ENCODE measurements at regions of chr15 and their contacts with region 1.

Region 1: DNA sequence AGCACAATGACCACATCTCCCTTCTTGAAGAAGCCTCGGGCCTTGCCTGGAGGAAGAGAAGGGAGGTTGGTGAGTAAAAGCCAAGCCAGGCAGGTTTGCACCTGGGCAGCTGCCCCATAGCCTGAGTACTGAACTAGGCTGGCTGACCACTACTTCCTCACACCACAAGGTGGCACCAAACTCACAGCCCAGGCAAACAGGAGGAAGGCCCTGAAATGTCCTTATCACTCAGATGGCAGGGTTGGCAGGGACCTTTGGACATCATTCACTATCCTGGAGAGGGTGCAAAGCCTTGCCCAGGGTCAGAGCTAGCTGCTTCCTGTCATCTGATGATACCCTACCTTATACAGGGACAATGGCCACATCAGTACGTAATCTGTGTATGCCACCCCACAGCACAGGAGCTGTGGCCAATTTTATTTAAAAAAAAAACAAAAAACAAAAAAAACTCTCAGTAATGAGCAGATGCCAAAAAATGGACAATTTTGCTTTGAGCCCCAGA is 2.2 kb upstream of the GRAMD2A start:
- DNase-seq: peak; percentile 69 to 78 (median 72)
- H3K4me3 ChIP-seq: no peak overlapping the region
- H3K4me3 Mint-ChIP-seq: no peak overlapping the region
- H3K27ac ChIP-seq: no peak overlapping the region
- H3K27ac Mint-ChIP-seq: peak overlapping the region in 3 of 7 donors; percentile 30 to 53 (median 48)
- H3K4me1 ChIP-seq: peaks cover 4% of the 10 kb centered on the region
- H3K4me1 Mint-ChIP-seq: peaks cover 0 to 14% (median 9%) of the 10 kb centered on the region in 4 donors
- H3K27me3 ChIP-seq: no peaks in the 10 kb centered on the region
- H3K27me3 Mint-ChIP-seq: peaks cover 2 to 3% of the 10 kb centered on the region in 2 donors

Region 2: GRCh38 chr15:72184165-72184889 is 15.4 kb before region 1 on chr15:
- CTCF ChIA-PET with region 1: no interaction called
- POLR2A ChIA-PET with region 1: no interaction called
- intact Hi-C with region 1: no loop called
- DNase-seq: no peak
- H3K4me3 ChIP-seq: no peak overlapping the region
- H3K4me3 Mint-ChIP-seq: no peak overlapping the region
- H3K27ac ChIP-seq: no peak overlapping the region
- H3K27ac Mint-ChIP-seq: no peak overlapping the region
- H3K4me1 ChIP-seq: no peaks in the 10 kb centered on the region
- H3K4me1 Mint-ChIP-seq: peaks cover 0 to 4% (median 0%) of the 10 kb centered on the region in 4 donors
- H3K27me3 ChIP-seq: peaks cover 11% of the 10 kb centered on the region
- H3K27me3 Mint-ChIP-seq: peaks cover 21 to 28% of the 10 kb centered on the region in 2 donors

Region 3: GRCh38 chr15:72222259-72222832 is 22.6 kb after region 1 on chr15:
- CTCF ChIA-PET with region 1: interaction called, 53 read pairs
- POLR2A ChIA-PET with region 1: interaction called, 7 read pairs
- intact Hi-C with region 1: loop called (anchors 1 kb)
- DNase-seq: no peak
- H3K4me3 ChIP-seq: no peak overlapping the region
- H3K4me3 Mint-ChIP-seq: peak overlapping the region in 5 of 8 donors; percentile 15 to 39 (median 36)
- H3K27ac ChIP-seq: no peak overlapping the region
- H3K27ac Mint-ChIP-seq: peak overlapping the region; percentile 67 to 92 (median 85)
- H3K4me1 ChIP-seq: peaks cover 72% of the 10 kb centered on the region
- H3K4me1 Mint-ChIP-seq: peaks cover 46 to 81% (median 66%) of the 10 kb centered on the region in 4 donors
- H3K27me3 ChIP-seq: no peaks in the 10 kb centered on the region
- H3K27me3 Mint-ChIP-seq: no peaks in the 10 kb centered on the region

Region 4: DNA sequence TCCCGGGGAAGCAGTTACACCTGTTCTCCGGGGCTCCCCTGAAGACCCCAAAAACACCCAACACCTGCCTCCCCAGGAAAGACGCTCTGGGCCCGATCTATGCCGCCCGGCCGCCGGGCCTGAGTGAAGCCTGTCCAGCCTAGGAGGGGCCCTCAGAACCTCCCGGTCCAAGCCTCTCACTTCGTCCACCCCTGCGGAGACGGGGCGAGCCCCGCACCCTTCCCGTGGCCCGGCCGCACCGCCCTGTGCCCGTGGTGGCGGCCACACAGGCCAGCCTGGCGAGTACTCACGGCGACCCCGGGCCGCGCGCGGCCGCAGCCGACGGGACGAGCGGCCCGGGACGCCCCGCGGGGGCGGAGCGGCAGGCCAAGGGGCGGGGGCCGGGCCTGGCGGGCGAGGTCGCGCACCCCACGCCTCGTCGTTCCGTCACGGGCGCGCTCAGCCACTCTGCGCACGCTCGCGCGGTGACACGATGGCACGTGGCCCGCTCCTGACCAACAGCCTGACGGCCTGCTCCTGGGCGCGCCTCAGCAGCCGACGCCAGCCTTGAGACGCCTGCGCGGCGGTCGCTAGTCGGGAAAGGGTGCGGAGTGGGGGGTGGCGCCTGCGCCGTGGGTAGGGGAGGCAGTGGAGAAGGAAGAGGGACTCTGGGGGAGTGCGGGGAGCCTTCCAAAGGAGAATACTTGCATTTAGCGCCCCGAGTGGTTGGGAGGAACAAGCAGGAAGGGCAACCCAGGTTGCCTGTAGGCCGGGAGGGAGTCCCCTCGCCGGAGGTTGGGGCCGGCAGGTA is 72.6 kb after region 1 on chr15 and contains the start of gene PARP6:
- CTCF ChIA-PET with region 1: interaction called, 26 read pairs
- POLR2A ChIA-PET with region 1: interaction called, 3 read pairs
- intact Hi-C with region 1: loop called (anchors 5 kb)
- DNase-seq: peak; percentile 98 to 100 (median 100)
- H3K4me3 ChIP-seq: peak within 1 kb of the TSS; percentile 26 to 65
- H3K4me3 Mint-ChIP-seq: peak within 1 kb of the TSS; percentile 85 to 93 (median 88)
- H3K27ac ChIP-seq: peak within 1 kb of the TSS; percentile 87
- H3K27ac Mint-ChIP-seq: peak within 1 kb of the TSS; percentile 93 to 97 (median 95)
- H3K4me1 ChIP-seq: peaks cover 34% of the 10 kb centered on the region
- H3K4me1 Mint-ChIP-seq: peaks cover 27 to 43% (median 36%) of the 10 kb centered on the region in 4 donors
- H3K27me3 ChIP-seq: no peaks in the 10 kb centered on the region
- H3K27me3 Mint-ChIP-seq: no peaks in the 10 kb centered on the region
- total RNA-seq, gene PARP6: 111 TPM

Region 5: DNA sequence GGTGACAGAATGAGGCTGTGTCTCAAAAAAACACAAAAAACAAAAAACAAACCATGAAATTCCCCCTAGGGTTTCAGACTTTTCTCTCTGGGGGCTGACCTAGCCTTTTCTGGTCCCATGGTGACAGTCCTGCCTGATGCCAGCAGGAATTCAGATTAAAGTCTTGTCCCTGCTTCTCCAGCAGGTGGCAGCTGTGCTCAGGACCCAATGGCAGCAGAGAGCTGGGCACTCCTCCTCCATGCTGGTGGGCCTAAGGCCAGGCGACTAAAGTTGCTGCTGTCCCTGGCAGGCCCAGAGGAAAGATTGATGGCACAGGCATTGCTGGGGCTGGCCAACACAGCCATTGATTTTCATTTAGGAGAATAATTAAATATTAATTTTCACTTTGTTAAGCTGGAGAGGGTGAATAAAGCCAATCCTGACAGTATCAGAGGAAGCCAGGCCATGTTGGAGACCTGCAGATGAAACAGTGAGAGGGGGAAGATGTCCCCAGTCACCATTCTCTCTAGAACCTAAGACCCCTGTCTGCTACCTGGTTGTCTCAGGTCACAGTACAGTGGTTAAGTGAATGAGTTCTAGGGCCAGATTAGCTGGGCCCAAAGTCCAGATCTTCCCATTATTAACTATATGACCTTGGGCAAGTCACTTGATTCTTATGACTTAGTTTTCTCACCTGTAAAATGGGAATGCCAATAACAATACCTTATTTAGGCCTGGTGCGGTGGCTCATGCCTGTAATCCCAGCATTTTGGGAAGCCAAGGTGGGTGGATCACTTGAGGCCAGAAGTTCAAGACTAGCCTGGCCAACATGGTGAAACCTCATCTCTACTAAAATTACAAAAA is 113.1 kb after region 1 on chr15:
- CTCF ChIA-PET with region 1: interaction called, 18 read pairs
- POLR2A ChIA-PET with region 1: no interaction called
- intact Hi-C with region 1: no loop called
- DNase-seq: peak; percentile 50 to 57 (median 53)
- H3K4me3 ChIP-seq: no peak overlapping the region
- H3K4me3 Mint-ChIP-seq: no peak overlapping the region
- H3K27ac ChIP-seq: no peak overlapping the region
- H3K27ac Mint-ChIP-seq: peak overlapping the region in 2 of 7 donors; percentile 23 to 45
- H3K4me1 ChIP-seq: no peaks in the 10 kb centered on the region
- H3K4me1 Mint-ChIP-seq: peaks cover 0 to 8% (median 3%) of the 10 kb centered on the region in 4 donors
- H3K27me3 ChIP-seq: no peaks in the 10 kb centered on the region
- H3K27me3 Mint-ChIP-seq: no peaks in the 10 kb centered on the region

Region 6: DNA sequence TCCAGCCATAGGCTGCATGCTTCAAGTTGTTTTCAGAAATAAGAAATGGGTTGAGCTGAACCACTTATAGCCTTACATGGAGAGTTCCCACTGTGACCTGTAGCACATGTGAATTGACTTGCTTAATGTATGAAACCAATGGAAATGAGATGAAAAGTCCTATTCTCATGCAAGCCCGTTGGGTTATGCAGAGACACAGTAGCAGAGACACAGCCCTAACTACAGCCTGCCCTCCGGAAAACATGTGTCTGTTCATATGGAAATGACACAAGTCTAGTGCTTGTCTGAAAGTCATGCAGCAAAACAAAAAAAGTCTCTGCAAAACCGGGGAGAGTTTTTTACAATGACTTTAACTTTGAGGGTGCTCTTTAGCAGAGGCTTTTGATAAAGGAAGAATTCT is 471.8 kb after region 1 on chr15:
- CTCF ChIA-PET with region 1: no interaction called
- POLR2A ChIA-PET with region 1: no interaction called
- intact Hi-C with region 1: loop called (anchors 10 kb)
- DNase-seq: no peak
- H3K4me3 ChIP-seq: no peak overlapping the region
- H3K4me3 Mint-ChIP-seq: no peak overlapping the region
- H3K27ac ChIP-seq: no peak overlapping the region
- H3K27ac Mint-ChIP-seq: no peak overlapping the region
- H3K4me1 ChIP-seq: peaks cover 4% of the 10 kb centered on the region
- H3K4me1 Mint-ChIP-seq: peaks cover 0 to 4% (median under 1%) of the 10 kb centered on the region in 4 donors
- H3K27me3 ChIP-seq: no peaks in the 10 kb centered on the region
- H3K27me3 Mint-ChIP-seq: peaks cover 7 to 13% of the 10 kb centered on the region in 2 donors

Measured in CD4-positive, alpha-beta memory T cell (primary cell).